Activated CD4-positive, alpha-beta memory T cell treated with anti-CD3 and anti-CD28 coated beads, Interleukin-2, amount 10 ng/mL, durations not matched to agents 7 days and 5 days (primary cell): ENCODE measurements at regions of chr2 and their contacts with region 1.

Region 1: GRCh38 chr2:204159526-204159925 is 223.0 kb downstream of the ICOS start:
- DNase-seq: no peak
- H3K4me3 Mint-ChIP-seq: no peak overlapping the region
- H3K27ac Mint-ChIP-seq: no peak overlapping the region
- H3K4me1 Mint-ChIP-seq: no peaks in the 10 kb centered on the region
- H3K27me3 Mint-ChIP-seq: peaks cover 12% of the 10 kb centered on the region

Region 2: GRCh38 chr2:204145263-204145751 is 14.2 kb before region 1 on chr2:
- CTCF ChIA-PET with region 1: interaction called, 14 read pairs
- POLR2A ChIA-PET with region 1: no interaction called
- DNase-seq: peak; percentile 84
- H3K4me3 Mint-ChIP-seq: peak overlapping the region; percentile 75
- H3K27ac Mint-ChIP-seq: no peak overlapping the region
- H3K4me1 Mint-ChIP-seq: peaks cover 14% of the 10 kb centered on the region
- H3K27me3 Mint-ChIP-seq: peaks cover 24% of the 10 kb centered on the region

Region 3: GRCh38 chr2:204265681-204266181 is 106.2 kb after region 1 on chr2:
- CTCF ChIA-PET with region 1: no interaction called
- POLR2A ChIA-PET with region 1: no interaction called
- DNase-seq: no peak
- H3K4me3 Mint-ChIP-seq: no peak overlapping the region
- H3K27ac Mint-ChIP-seq: no peak overlapping the region
- H3K4me1 Mint-ChIP-seq: no peaks in the 10 kb centered on the region
- H3K27me3 Mint-ChIP-seq: peaks cover 43% of the 10 kb centered on the region